ENCODE measurements at regions of chr11 and their contacts with region 1.

Region 1: GRCh38 chr11:71448257-71449171 is at the start of gene DHCR7:
- DNase-seq: peak; percentile 97 to 99 (median 98)
- ATAC-seq: peak; percentile 93
- H3K4me3 ChIP-seq: peak within 1 kb of the TSS; percentile 67
- H3K27ac ChIP-seq: peak within 1 kb of the TSS; percentile 79
- H3K4me1 ChIP-seq: peaks cover 12 to 38% of the 10 kb centered on the region in 2 experiments; a peak in 4 of 5 replicates
- H3K27me3 ChIP-seq: no peaks in the 10 kb centered on the region
- CTCF ChIP-seq: no peak
- EP300 ChIP-seq: no peak
- POLR2A ChIP-seq: peak; percentile 79
- RAD21 ChIP-seq: no peak
- polyA plus RNA-seq, gene DHCR7: 8.4 to 14.5 TPM

Region 2: DNA sequence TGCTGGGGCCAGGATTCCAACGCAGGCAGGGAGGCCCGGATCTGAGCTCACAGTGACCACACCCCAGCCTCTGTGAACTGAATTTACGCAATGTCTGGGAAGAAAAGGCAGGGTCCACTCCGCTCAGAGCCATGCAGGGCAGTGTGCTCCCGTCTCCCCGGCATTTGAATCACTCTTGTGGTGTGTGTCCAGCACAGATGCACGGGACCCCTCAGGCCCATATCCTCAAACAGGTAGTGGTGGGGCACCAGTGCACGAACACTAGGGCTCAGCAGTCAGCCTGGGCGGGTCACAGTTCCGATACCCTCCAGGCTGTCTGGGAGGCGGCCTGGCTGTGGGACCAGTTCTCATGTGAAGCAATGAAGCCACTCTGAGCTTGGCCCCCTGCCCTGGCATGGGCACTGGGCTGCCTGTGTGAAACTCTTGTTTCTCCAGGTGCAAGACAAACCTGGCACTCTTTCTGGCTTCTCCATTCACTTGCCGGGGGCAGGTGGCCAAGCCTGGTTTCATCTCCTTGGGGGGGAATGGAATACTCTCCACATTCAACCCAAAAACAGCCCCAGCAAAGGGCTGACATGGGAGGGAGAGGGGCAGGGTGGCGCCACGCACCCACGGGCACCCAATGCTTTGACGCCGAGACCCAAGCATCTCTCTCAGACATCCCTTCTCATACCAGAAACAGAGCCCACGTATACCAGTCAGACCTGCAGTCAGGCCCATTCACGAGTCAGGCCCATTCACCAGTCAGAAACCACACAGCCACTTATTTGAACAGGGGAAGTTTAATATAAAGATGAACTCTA is 14.7 kb before region 1 on chr11:
- CTCF ChIA-PET with region 1: no interaction called
- POLR2A ChIA-PET with region 1: interaction called, 26 read pairs
- in situ Hi-C with region 1: no loop called
- intact Hi-C with region 1: no loop called
- DNase-seq: peak in 2 of 4 experiments; percentile 46 to 55
- ATAC-seq: peak; percentile 82
- H3K4me3 ChIP-seq: no peak overlapping the region
- H3K27ac ChIP-seq: peak overlapping the region; percentile 18; the same call in 1 of the 3 replicates
- H3K4me1 ChIP-seq: peaks cover 9 to 15% of the 10 kb centered on the region in 2 experiments; a peak in 3 of 5 replicates
- H3K27me3 ChIP-seq: peaks cover 6 to 17% of the 10 kb centered on the region in 2 experiments
- CTCF ChIP-seq: no peak
- EP300 ChIP-seq: no peak
- POLR2A ChIP-seq: no peak; the same call in none of the 2 replicates
- RAD21 ChIP-seq: no peak

Region 3: DNA sequence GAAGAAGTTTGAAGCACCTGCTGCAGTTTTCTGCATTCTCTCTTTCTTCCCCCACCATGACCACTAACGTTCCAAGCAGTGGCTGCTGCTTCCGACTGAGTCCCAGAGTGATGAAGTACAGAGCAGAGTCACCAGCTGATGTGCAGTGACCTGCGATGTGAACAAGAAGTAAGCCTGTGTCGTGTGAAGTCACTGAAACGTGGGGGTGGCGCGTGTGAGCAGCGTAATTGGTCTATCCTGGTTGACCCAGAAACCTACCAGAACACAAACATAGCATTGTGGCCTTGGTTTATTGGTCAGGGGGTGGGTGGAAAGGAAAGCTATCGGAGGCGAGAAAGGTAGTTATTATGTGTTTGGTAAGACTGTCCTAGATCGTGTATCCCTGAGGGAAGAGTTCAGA is 82.1 kb after region 1 on chr11:
- CTCF ChIA-PET with region 1: no interaction called
- POLR2A ChIA-PET with region 1: no interaction called
- in situ Hi-C with region 1: no loop called
- intact Hi-C with region 1: loop called (anchors 10 kb)
- DNase-seq: no peak
- ATAC-seq: peak; percentile 41; the same call in 2 of the 3 replicates
- H3K4me3 ChIP-seq: no peak overlapping the region
- H3K27ac ChIP-seq: no peak overlapping the region
- H3K4me1 ChIP-seq: peaks cover 8 to 13% of the 10 kb centered on the region in 2 experiments; a peak in 3 of 5 replicates
- H3K27me3 ChIP-seq: peaks cover 6 to 14% of the 10 kb centered on the region in 2 experiments; a peak in 3 of 5 replicates
- CTCF ChIP-seq: no peak
- EP300 ChIP-seq: no peak
- POLR2A ChIP-seq: no peak
- RAD21 ChIP-seq: no peak